ENCODE measurements at regions of chr17 and their contacts with region 1.

Region 1: DNA sequence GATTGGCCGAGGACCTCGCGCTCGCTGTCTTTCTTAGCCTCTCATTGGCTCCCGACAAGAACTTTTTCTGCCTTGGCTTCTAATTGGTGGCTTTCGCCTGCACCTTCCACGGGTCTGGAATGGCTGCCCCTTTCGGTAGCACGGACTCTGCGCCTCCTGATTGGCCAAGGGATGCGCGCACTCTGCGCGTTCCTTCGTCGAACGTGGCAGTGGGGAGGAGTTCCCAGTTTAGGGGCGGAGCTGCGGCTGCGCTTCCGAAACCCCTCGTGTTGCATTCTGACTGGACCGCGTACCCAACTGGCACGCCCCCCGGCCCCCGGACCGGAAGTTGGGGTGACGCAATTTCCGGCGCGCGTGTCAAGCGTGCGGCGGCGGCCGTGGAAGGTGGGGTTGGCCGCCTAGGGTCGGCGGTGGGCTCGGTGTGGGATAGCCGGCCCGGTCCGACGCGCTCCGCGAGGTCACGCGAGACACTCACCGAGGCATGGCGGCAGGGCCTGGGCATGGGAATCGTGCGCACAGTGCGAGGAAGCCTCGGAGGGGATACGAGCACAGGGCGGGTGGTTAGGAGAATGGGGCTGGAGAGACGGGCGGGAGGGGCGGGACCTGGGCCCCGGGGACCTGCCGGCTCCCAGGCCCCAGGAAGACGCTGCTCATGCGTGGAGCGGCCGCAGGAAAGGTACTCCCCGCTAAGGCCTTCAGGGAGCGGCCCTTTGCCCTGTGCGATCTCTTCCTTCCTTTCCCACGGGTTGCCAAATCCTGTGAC is 602 bp upstream of the P4HB start:
- DNase-seq: peak; percentile 99 to 100 (median 99)
- ATAC-seq: peak; percentile 94 to 99 (median 98)
- H3K4me3 ChIP-seq: peak overlapping the region; percentile 54 to 99 (median 81)
- H3K27ac ChIP-seq: peak overlapping the region; percentile 75 to 99 (median 95)
- H3K4me1 ChIP-seq: peaks cover 11 to 60% (median 42%) of the 10 kb centered on the region in 12 donors
- H3K27me3 ChIP-seq: no peaks in the 10 kb centered on the region
- CTCF ChIP-seq: peak in 6 of 12 donors; percentile 8 to 32 (median 18)
- POLR2A ChIP-seq: peak; percentile 77 to 86

Region 2: DNA sequence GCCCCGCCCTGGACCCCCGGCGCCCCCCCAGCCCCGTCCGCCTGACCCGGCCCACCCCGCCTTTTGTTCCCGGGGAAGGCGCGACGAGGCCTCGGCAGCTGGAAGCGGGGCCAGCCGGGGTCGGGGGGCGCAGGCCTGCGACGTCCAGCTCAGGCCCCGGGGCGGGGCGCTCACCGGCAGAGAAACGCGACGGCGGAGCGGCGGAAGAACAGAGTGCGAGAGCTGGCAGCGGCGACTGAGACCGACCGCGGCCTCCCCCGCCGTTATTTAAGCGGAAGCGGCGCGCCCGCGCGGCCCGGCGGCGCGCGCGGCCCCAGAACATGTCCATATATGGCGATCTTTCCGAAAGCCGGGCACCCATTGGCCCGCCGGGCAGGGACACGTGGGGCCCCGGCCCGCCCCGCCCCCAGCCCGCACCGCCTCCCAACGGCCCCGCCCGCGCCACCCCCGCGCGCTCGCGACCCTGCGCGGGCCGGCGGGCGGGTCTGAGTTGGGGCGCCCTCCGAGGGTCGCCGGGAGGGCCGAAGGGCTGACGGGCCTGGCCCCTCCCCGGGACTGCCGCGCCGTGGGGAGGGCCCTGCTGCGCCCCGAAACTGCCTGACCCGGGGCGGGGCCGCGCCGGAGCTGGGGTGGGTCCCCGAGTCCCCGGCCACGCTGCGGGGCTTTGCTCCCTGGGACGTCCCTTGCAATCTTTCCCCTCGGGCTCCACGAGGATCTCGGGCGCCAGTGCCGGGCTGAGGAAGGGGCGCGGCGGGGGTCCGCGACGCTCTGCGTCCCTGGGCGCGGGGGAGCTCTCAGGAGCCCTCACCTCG is 348.2 kb before region 1 on chr17 and contains the start of gene ACTG1:
- intact Hi-C with region 1: loop called in 1 of 10 experiments (anchors 10 kb)
- DNase-seq: peak; percentile 94 to 96 (median 95)
- ATAC-seq: peak; percentile 61 to 77 (median 66)
- H3K4me3 ChIP-seq: peak within 1 kb of the TSS; percentile 81 to 99 (median 94)
- H3K27ac ChIP-seq: peak within 1 kb of the TSS; percentile 96 to 100 (median 100)
- H3K4me1 ChIP-seq: peaks cover 6 to 58% (median 39%) of the 10 kb centered on the region in 12 donors
- H3K27me3 ChIP-seq: no peaks in the 10 kb centered on the region
- CTCF ChIP-seq: no peak
- POLR2A ChIP-seq: peak; percentile 83 to 94
- total RNA-seq, gene ACTG1: 335 to 1,653 (median 423) TPM

Region 3: GRCh38 chr17:81821603-81822311 is 39.2 kb before region 1 on chr17:
- intact Hi-C with region 1: loop called in 3 of 10 experiments (anchors 1 to 5 kb)
- DNase-seq: peak; percentile 85 to 93 (median 90)
- ATAC-seq: peak; percentile 90 to 93 (median 91)
- H3K4me3 ChIP-seq: peak overlapping the region in 1 of 12 donors; percentile 2
- H3K27ac ChIP-seq: peak overlapping the region; percentile 78 to 96 (median 89)
- H3K4me1 ChIP-seq: peaks cover 3 to 29% (median 17%) of the 10 kb centered on the region in 12 donors
- H3K27me3 ChIP-seq: no peaks in the 10 kb centered on the region
- CTCF ChIP-seq: peak; percentile 58 to 79 (median 66)
- POLR2A ChIP-seq: no peak

Region 4: GRCh38 chr17:81833160-81833920 is 27.6 kb before region 1 on chr17 and contains the start of gene MCRIP1:
- intact Hi-C with region 1: loop called in 1 of 10 experiments (anchors 1 kb)
- DNase-seq: peak; percentile 96 to 98 (median 97)
- ATAC-seq: peak; percentile 85 to 92 (median 90)
- H3K4me3 ChIP-seq: peak within 1 kb of the TSS; percentile 73 to 98 (median 90)
- H3K27ac ChIP-seq: peak within 1 kb of the TSS; percentile 20 to 99 (median 96)
- H3K4me1 ChIP-seq: peaks cover 0 to 39% (median 23%) of the 10 kb centered on the region in 12 donors
- H3K27me3 ChIP-seq: no peaks in the 10 kb centered on the region
- CTCF ChIP-seq: no peak
- POLR2A ChIP-seq: peak; percentile 35 to 91
- total RNA-seq, gene MCRIP1: 74.8 to 134 (median 102) TPM

Region 5: GRCh38 chr17:82022981-82023374 is 162.0 kb after region 1 on chr17 and contains the start of gene LRRC45:
- intact Hi-C with region 1: loop called in 2 of 10 experiments (anchors 2 to 10 kb)
- DNase-seq: peak; percentile 100
- ATAC-seq: peak; percentile 94 to 98 (median 96)
- H3K4me3 ChIP-seq: peak within 1 kb of the TSS; percentile 77 to 99 (median 94)
- H3K27ac ChIP-seq: peak within 1 kb of the TSS in 11 of 12 donors; percentile 32 to 85 (median 73)
- H3K4me1 ChIP-seq: peaks cover 5 to 37% (median 23%) of the 10 kb centered on the region in 12 donors
- H3K27me3 ChIP-seq: no peaks in the 10 kb centered on the region
- CTCF ChIP-seq: no peak
- POLR2A ChIP-seq: no peak
- total RNA-seq, gene LRRC45: 2.9 to 7.5 (median 5.6) TPM

Measured in heart left ventricle (tissue), 16 donors.